ENCODE measurements at regions of chr18 and their contacts with region 1.

Region 1: DNA sequence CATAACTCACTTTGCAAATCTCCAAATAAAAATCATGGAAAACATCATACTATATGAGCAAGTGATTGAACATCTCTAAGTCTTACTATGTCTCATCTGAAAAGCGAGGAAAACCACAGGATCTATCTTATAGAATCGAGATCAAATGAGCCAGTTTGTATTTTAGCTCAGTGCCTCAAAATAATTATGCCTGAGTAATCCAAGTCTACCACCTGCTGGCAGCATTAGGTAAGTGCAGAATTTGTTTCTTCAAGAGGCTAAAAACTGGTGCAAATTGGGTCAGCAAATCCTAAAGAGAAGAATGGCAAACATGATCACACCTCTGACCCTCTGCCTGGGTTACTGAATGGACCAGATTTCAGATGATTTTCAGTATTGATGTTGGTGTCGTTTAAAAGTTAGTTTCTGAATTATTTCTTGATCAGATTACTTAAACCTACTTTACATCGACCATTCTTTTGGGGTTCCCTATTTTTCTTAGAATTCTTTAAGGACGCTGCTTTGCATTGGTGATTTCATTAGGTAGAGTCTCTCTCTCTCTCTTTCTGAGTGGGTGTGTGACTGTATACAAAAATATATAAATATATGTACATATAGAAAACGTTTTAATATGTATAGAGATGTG is 12.7 kb upstream of the FHOD3 start:
- DNase-seq: peak; percentile 28
- ATAC-seq: peak; percentile 60
- H3K4me3 Mint-ChIP-seq: no peak overlapping the region
- H3K27ac Mint-ChIP-seq: no peak overlapping the region
- H3K4me1 Mint-ChIP-seq: no peaks in the 10 kb centered on the region; the same call in 1 of the 2 replicates
- H3K27me3 Mint-ChIP-seq: peaks cover 4% of the 10 kb centered on the region
- CTCF ChIP-seq: peak; percentile 61

Region 2: DNA sequence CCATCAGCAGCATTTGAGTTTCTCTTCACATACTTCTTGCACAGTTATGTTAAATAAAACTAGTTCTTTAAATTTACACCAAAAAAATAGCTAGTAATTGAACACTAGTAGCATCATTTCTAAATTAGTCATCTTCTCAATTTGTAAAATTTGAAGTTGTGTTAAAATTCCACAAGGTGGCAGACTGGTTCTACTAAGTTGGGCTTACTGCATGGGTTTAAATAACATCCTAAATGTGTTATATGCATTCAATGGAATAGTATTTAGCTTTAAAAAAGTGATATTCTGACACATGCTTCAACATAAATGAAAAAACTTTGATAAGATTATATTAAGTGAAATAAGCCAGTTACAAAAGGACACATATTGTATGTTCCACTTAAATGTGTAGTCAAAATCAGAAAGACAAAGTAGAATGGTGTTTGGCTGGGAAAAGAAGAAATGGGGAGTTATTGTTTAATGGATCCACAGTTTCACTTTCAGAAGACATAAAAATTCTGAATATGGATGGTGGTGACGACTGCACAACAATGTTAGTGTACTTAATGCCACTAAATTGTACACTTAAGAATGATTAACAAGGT is 188.8 kb before region 1 on chr18:
- CTCF ChIA-PET with region 1: interaction called, 44 read pairs
- POLR2A ChIA-PET with region 1: no interaction called
- DNase-seq: no peak
- ATAC-seq: no peak
- H3K4me3 Mint-ChIP-seq: no peak overlapping the region
- H3K27ac Mint-ChIP-seq: no peak overlapping the region
- H3K4me1 Mint-ChIP-seq: no peaks in the 10 kb centered on the region
- H3K27me3 Mint-ChIP-seq: no peaks in the 10 kb centered on the region; the same call in 1 of the 2 replicates
- CTCF ChIP-seq: peak; percentile 41; the same call in 1 of the 2 replicates

Region 3: DNA sequence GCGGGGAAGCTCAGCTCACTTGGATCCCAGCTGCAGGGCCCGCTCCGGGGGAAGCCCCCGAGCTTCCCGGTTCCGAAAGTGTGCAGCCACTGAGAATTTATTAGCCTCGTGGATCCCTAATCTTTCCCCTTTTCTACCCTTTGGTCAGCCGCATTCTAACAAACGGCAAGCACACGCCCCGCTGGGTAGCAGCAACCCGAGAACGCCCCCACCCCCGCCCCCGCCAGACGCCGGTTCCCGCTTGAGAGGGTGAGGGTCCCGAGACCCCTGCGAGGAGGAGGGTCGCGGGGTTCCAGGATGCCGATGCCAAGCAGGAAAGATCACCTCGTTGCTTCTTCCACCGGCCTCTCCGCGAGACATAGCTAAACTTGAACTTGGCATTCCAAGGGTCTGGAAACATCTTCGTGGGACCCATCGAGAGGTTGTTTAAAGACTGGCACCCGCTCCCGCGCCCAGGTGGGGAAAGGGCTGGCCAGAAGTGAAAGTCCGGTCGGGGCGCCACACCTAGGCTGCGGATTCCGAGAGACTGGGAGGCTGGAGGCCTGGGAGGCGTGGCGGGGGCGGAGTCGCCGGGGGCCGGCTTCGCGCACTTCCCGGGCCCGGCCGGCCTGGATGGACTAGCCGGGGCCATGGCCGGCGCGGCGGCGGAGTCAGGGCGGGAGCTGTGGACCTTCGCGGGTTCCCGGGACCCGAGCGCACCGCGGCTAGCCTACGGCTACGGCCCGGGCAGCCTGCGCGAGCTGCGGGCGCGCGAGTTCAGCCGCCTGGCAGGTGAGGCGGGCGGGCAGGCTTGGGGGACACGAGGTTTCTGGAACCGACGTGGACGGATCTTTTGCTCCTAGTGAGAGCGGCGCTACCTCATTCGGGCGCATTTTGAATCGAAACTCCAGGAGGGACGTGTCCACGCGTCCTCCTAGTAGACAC is 97.6 kb before region 1 on chr18 and contains the start of gene MOCOS:
- CTCF ChIA-PET with region 1: interaction called, 29 read pairs
- POLR2A ChIA-PET with region 1: no interaction called
- DNase-seq: peak; percentile 86
- ATAC-seq: peak; percentile 81
- H3K4me3 Mint-ChIP-seq: peak within 1 kb of the TSS; percentile 80
- H3K27ac Mint-ChIP-seq: peak within 1 kb of the TSS; percentile 74; the same call in 1 of the 2 replicates
- H3K4me1 Mint-ChIP-seq: peaks cover 23% of the 10 kb centered on the region
- H3K27me3 Mint-ChIP-seq: peaks cover 51% of the 10 kb centered on the region
- CTCF ChIP-seq: no peak
- total RNA-seq, gene MOCOS: 4.2 to 5.3 TPM (median 4.8 TPM) in 3 replicates

Region 4: DNA sequence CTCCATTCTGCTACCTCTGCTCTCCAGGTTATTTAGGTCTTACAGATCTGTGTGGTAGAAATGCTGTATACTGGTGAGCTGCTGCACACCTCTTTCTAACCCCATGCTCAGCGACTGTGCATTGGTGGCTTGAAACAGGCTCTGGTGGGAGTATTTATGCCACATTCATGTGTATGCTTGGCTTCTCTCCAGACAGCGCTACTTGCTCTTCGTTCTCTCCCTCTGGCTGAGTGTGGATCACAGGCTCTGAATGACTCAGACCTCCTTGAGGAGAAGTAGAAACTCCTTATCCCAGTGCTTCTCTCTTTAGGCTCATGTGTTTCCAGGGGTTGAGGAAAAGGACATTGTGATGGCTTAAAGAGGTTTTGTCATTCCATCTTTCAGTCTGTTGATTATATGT is 67.6 kb after region 1 on chr18:
- CTCF ChIA-PET with region 1: no interaction called
- POLR2A ChIA-PET with region 1: no interaction called
- DNase-seq: no peak
- ATAC-seq: no peak
- H3K4me3 Mint-ChIP-seq: no peak overlapping the region
- H3K27ac Mint-ChIP-seq: no peak overlapping the region
- H3K4me1 Mint-ChIP-seq: peaks cover 26% of the 10 kb centered on the region
- H3K27me3 Mint-ChIP-seq: no peaks in the 10 kb centered on the region
- CTCF ChIP-seq: no peak

Region 5: DNA sequence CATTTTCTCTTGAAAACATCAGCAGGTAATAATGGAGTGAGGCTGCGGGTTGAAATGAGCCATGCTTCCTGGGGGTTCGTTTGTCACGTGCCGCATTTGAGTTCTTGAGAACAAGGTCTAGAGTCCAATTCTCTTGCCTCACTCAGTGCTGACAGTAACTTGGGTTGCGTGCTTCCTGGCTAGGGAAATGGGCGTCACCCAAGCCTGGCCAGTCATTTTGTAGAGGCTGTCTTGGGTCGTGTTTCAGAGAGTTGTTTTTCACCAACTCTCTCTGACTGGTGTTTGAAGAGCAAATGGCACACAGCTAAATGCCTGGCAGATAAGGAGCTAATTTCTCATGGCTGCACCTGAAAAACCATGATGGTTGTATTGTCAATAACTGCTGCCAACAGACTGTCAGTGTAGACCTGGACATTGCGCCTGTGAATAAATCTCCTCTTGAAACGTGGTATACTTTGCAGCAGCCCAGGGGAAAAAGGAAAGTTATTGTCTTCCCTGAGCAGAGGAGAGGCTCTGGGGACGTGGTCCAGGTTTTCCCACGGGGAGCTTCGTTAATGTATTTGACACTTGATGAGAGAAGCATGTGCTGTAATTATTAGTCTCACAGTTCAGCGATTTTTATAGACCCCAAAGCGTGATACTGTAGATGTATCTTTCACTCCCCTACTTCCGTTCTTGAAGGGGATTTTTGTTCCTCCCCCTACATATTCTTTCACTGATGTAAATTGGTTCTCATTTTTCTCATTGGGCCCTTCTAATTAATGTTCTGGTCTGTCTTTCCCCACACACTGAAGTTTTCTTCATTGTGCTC is 208.8 kb after region 1 on chr18:
- CTCF ChIA-PET with region 1: no interaction called
- POLR2A ChIA-PET with region 1: no interaction called
- DNase-seq: peak; percentile 36
- ATAC-seq: peak; percentile 95
- H3K4me3 Mint-ChIP-seq: no peak overlapping the region
- H3K27ac Mint-ChIP-seq: peak overlapping the region; percentile 58; the same call in 1 of the 2 replicates
- H3K4me1 Mint-ChIP-seq: peaks cover 22% of the 10 kb centered on the region
- H3K27me3 Mint-ChIP-seq: no peaks in the 10 kb centered on the region
- CTCF ChIP-seq: no peak

Measured in WTC11 (cell line).